ENCODE measurements at regions of chr19 and their contacts with region 1.

Region 1: DNA sequence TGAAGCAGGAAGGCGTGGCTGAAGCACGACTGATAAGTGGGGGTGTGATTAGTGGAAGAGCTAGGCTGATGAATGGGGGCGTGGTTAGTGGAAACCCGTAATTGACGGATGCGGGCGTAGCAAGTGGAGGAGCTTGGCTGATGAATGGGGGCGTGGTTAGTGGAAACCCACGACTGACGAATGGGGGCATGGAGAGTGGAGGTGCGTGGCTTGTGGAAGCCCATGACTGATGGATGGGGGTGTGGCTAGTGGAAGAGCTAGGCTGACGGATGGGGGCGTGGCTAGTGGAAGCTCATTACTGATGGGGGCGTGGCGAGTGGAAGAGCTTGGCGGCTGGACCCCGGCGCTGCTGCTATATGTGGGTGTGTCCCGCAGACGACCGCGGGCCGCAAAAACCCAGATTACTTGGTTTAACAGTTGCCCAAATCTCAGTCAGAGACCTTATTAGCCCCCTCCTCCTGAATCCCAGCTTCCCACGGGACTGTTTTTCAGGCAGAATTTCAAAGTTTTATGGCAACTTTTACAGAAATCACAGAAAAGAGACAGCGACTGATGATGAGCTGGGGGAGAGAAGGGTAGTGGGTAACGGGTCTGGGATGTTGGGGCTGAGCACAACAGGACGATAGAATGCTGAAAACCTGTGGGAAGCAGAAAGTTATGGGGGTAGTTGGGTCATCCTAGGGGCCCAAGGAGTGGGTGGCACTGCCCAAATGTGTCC is 9.0 kb upstream of the MEIS3 start:
- H3K4me3 ChIP-seq: peak overlapping the region; percentile 4; the same call in 1 of the 2 replicates
- H3K27ac ChIP-seq: no peak overlapping the region
- H3K4me1 ChIP-seq: peaks cover 10% of the 10 kb centered on the region
- CTCF ChIP-seq: no peak

Region 2: GRCh38 chr19:47273313-47273977 is 154.9 kb before region 1 on chr19:
- CTCF ChIA-PET with region 1: interaction called, 11 read pairs
- POLR2A ChIA-PET with region 1: interaction called, 9 read pairs
- H3K4me3 ChIP-seq: peak overlapping the region; percentile 58
- H3K27ac ChIP-seq: peak overlapping the region; percentile 97
- H3K4me1 ChIP-seq: peaks cover 11% of the 10 kb centered on the region
- CTCF ChIP-seq: no peak

Region 3: GRCh38 chr19:47284324-47284899 is 143.9 kb before region 1 on chr19:
- CTCF ChIA-PET with region 1: interaction called, 13 read pairs
- POLR2A ChIA-PET with region 1: interaction called, 5 read pairs
- H3K4me3 ChIP-seq: no peak overlapping the region
- H3K27ac ChIP-seq: no peak overlapping the region
- H3K4me1 ChIP-seq: peaks cover 6% of the 10 kb centered on the region; the same call in 1 of the 2 replicates
- CTCF ChIP-seq: peak; percentile 66

Region 4: DNA sequence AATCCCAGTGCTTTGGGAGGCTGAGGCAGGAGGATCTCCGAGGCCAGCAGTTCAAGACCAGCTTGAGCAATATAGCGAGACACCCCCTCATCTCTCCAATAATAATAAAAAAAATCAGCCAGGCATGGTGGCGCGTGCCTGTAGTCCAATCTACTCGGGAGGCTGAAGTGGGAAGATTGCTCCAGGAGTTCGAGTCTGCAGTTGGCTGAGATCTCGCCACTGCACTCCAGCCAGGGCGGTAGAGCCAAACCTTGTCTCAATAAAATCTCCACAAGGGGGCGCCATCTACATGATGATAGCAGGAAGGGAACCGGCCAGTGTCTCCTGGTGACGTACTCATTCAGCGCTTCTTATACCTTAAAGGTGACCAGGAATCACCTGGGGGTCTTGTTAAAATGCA is 132.3 kb before region 1 on chr19:
- CTCF ChIA-PET with region 1: interaction called, 61 read pairs
- POLR2A ChIA-PET with region 1: interaction called, 5 read pairs
- H3K4me3 ChIP-seq: no peak overlapping the region
- H3K27ac ChIP-seq: no peak overlapping the region
- H3K4me1 ChIP-seq: no peaks in the 10 kb centered on the region
- CTCF ChIP-seq: peak; percentile 70

Region 5: GRCh38 chr19:47406711-47407416 is 21.5 kb before region 1 on chr19:
- CTCF ChIA-PET with region 1: no interaction called
- POLR2A ChIA-PET with region 1: no interaction called
- H3K4me3 ChIP-seq: no peak overlapping the region
- H3K27ac ChIP-seq: no peak overlapping the region
- H3K4me1 ChIP-seq: no peaks in the 10 kb centered on the region
- CTCF ChIP-seq: no peak

Region 6: DNA sequence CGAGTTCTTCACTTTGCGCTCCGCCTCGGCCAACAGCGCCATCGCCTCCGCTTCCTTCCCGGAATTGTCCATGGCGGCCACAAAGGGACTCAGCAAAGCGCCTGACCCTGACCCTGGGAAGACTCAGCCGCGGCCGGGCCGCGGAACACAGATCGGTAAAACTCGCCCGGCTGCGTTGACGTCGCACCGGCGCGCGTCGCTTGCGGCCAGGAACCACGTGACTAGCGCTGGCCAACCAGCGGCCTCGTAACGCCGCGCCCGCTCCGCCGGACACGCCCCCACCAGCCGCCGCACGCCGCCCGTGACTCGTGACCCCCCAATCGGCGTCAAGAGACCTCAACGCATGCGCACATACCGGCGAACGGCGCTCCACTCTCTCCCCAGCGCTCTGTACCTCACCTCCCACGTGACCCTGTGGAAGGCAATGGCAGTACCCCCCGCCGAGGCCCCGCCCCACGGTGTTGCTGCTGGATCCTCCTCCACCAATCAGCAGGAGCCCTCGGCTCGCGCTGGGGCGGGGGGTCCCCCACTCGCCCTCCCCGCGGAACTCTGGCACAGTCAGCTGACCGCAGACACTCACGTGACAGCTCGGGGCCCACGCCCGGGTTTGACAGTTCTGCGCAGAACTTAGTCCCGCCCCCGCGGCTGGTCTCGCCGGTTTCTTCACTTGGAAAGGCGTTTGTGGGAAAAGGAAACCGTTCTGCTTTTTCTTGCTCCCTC is 86.7 kb after region 1 on chr19 and contains the start of gene NAPA:
- CTCF ChIA-PET with region 1: interaction called, 19 read pairs
- POLR2A ChIA-PET with region 1: no interaction called
- H3K4me3 ChIP-seq: peak within 1 kb of the TSS; percentile 75
- H3K27ac ChIP-seq: peak within 1 kb of the TSS; percentile 73
- H3K4me1 ChIP-seq: peaks cover 17% of the 10 kb centered on the region
- CTCF ChIP-seq: no peak

Region 7: GRCh38 chr19:47697863-47698609 is 269.7 kb after region 1 on chr19:
- CTCF ChIA-PET with region 1: interaction called, 102 read pairs
- POLR2A ChIA-PET with region 1: no interaction called
- H3K4me3 ChIP-seq: no peak overlapping the region
- H3K27ac ChIP-seq: 0 out of 2 replicates have a peak overlapping the region, but pooled peaks have one; percentile 52
- H3K4me1 ChIP-seq: no peaks in the 10 kb centered on the region
- CTCF ChIP-seq: peak; percentile 97

Region 8: DNA sequence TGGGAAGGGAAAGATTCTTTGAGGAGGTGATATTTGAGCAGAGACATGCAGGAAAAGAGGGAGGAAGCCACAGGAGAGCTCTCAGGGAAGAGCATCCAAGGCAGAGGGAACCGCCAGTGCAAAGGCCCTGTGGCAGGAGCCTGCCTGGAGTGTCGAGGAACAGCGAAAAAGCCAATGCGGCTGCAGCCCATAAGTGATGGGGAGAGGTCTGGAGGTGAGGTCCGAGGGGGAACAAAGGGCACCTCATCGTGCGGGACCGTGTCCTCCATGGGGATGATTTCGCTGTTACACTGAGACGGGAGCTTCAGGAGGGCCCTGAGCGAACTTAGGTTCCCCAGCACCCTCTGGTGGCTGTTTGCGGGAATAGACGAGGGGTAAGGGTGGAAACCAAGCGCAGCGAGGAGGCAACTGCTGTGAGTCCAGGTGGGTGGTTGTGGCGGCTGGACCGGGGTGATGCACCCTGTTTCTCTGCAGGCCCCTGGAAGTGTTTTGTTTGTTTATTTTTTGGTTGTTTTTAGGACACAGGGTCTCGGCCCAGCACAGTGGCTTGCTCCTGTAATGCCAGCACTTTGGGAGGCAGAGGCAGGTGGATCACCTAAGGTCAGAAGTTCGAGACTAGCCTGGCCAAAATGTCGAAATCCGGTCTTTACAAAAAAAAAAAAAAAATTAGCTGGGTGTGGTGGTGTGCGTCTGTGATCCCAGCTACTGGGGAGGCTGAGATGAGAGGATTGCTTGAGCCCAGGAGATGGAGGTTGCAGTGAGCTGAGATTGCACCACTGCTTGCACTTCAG is 279.0 kb after region 1 on chr19:
- CTCF ChIA-PET with region 1: interaction called, 121 read pairs
- POLR2A ChIA-PET with region 1: interaction called, 4 read pairs
- H3K4me3 ChIP-seq: no peak overlapping the region
- H3K27ac ChIP-seq: no peak overlapping the region
- H3K4me1 ChIP-seq: no peaks in the 10 kb centered on the region
- CTCF ChIP-seq: peak; percentile 84